B cell (primary cell): ENCODE measurements at regions of chr5 and their contacts with region 1.

Region 1: GRCh38 chr5:145825751-145826180 is 9.4 kb downstream of the PRELID2 start:
- DNase-seq: peak; percentile 53
- ATAC-seq: no peak
- H3K4me3 ChIP-seq: no peak overlapping the region
- H3K4me3 Mint-ChIP-seq: no peak overlapping the region
- H3K27ac ChIP-seq: no peak overlapping the region
- H3K27ac Mint-ChIP-seq: no peak overlapping the region
- H3K4me1 ChIP-seq: no peaks in the 10 kb centered on the region
- H3K4me1 Mint-ChIP-seq: no peaks in the 10 kb centered on the region
- H3K27me3 ChIP-seq: no peaks in the 10 kb centered on the region
- H3K27me3 Mint-ChIP-seq: no peaks in the 10 kb centered on the region
- CTCF ChIP-seq: peak; percentile 79

Region 2: GRCh38 chr5:144203750-144204596 is 1621.8 kb before region 1 on chr5:
- CTCF ChIA-PET with region 1: interaction called, 49 read pairs
- POLR2A ChIA-PET with region 1: no interaction called
- intact Hi-C with region 1: no loop called
- DNase-seq: peak; percentile 72
- ATAC-seq: peak; percentile 67
- H3K4me3 ChIP-seq: no peak overlapping the region
- H3K4me3 Mint-ChIP-seq: no peak overlapping the region
- H3K27ac ChIP-seq: no peak overlapping the region
- H3K27ac Mint-ChIP-seq: no peak overlapping the region
- H3K4me1 ChIP-seq: no peaks in the 10 kb centered on the region
- H3K4me1 Mint-ChIP-seq: no peaks in the 10 kb centered on the region
- H3K27me3 ChIP-seq: peaks cover 0 to 25% (median 17%) of the 10 kb centered on the region in 4 experiments
- H3K27me3 Mint-ChIP-seq: peaks cover 70% of the 10 kb centered on the region
- CTCF ChIP-seq: peak; percentile 95

Region 3: GRCh38 chr5:144487207-144487606 is 1338.6 kb before region 1 on chr5:
- CTCF ChIA-PET with region 1: no interaction called
- POLR2A ChIA-PET with region 1: no interaction called
- intact Hi-C with region 1: loop called (anchors 5 kb)
- DNase-seq: peak; percentile 8
- ATAC-seq: no peak
- H3K4me3 ChIP-seq: no peak overlapping the region
- H3K4me3 Mint-ChIP-seq: no peak overlapping the region
- H3K27ac ChIP-seq: no peak overlapping the region
- H3K27ac Mint-ChIP-seq: no peak overlapping the region
- H3K4me1 ChIP-seq: no peaks in the 10 kb centered on the region
- H3K4me1 Mint-ChIP-seq: no peaks in the 10 kb centered on the region
- H3K27me3 ChIP-seq: no peaks in the 10 kb centered on the region
- H3K27me3 Mint-ChIP-seq: no peaks in the 10 kb centered on the region
- CTCF ChIP-seq: no peak

Region 4: DNA sequence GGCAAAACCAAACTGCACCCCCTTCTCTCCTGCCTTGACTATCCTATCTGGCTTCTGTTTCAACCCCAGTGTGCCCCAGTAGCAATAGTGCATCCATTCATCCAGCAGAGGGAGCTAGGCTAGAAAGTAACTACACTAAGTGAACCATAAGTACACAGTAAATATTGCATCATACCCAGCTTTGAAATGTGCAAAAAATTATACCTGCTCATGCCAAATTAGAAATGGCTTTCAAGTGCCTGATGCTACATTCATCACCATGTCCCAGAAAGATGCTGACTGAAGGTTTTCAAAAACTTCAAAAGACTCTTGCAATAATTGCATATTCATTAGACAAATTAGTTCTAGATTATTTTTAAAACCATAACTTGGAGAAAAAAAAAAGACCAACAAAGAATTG is 144.1 kb before region 1 on chr5:
- CTCF ChIA-PET with region 1: interaction called, 4 read pairs
- POLR2A ChIA-PET with region 1: no interaction called
- intact Hi-C with region 1: loop called (anchors 5 kb)
- DNase-seq: peak; percentile 38
- ATAC-seq: no peak
- H3K4me3 ChIP-seq: no peak overlapping the region
- H3K4me3 Mint-ChIP-seq: no peak overlapping the region
- H3K27ac ChIP-seq: no peak overlapping the region
- H3K27ac Mint-ChIP-seq: no peak overlapping the region
- H3K4me1 ChIP-seq: no peaks in the 10 kb centered on the region
- H3K4me1 Mint-ChIP-seq: no peaks in the 10 kb centered on the region
- H3K27me3 ChIP-seq: no peaks in the 10 kb centered on the region
- H3K27me3 Mint-ChIP-seq: no peaks in the 10 kb centered on the region
- CTCF ChIP-seq: peak; percentile 56

Region 5: GRCh38 chr5:145697251-145697990 is 128.3 kb before region 1 on chr5:
- CTCF ChIA-PET with region 1: no interaction called
- POLR2A ChIA-PET with region 1: no interaction called
- intact Hi-C with region 1: loop called (anchors 5 kb)
- DNase-seq: peak; percentile 7
- ATAC-seq: no peak
- H3K4me3 ChIP-seq: no peak overlapping the region
- H3K4me3 Mint-ChIP-seq: no peak overlapping the region
- H3K27ac ChIP-seq: no peak overlapping the region
- H3K27ac Mint-ChIP-seq: no peak overlapping the region
- H3K4me1 ChIP-seq: no peaks in the 10 kb centered on the region
- H3K4me1 Mint-ChIP-seq: no peaks in the 10 kb centered on the region
- H3K27me3 ChIP-seq: no peaks in the 10 kb centered on the region
- H3K27me3 Mint-ChIP-seq: no peaks in the 10 kb centered on the region
- CTCF ChIP-seq: no peak

Region 6: GRCh38 chr5:145752947-145753346 is 72.8 kb before region 1 on chr5:
- CTCF ChIA-PET with region 1: no interaction called
- POLR2A ChIA-PET with region 1: no interaction called
- intact Hi-C with region 1: no loop called
- DNase-seq: no peak
- ATAC-seq: no peak
- H3K4me3 ChIP-seq: no peak overlapping the region
- H3K4me3 Mint-ChIP-seq: no peak overlapping the region
- H3K27ac ChIP-seq: no peak overlapping the region
- H3K27ac Mint-ChIP-seq: no peak overlapping the region
- H3K4me1 ChIP-seq: no peaks in the 10 kb centered on the region
- H3K4me1 Mint-ChIP-seq: no peaks in the 10 kb centered on the region
- H3K27me3 ChIP-seq: no peaks in the 10 kb centered on the region
- H3K27me3 Mint-ChIP-seq: no peaks in the 10 kb centered on the region
- CTCF ChIP-seq: no peak